ENCODE measurements at regions of chr5 and their contacts with region 1.

Region 1: DNA sequence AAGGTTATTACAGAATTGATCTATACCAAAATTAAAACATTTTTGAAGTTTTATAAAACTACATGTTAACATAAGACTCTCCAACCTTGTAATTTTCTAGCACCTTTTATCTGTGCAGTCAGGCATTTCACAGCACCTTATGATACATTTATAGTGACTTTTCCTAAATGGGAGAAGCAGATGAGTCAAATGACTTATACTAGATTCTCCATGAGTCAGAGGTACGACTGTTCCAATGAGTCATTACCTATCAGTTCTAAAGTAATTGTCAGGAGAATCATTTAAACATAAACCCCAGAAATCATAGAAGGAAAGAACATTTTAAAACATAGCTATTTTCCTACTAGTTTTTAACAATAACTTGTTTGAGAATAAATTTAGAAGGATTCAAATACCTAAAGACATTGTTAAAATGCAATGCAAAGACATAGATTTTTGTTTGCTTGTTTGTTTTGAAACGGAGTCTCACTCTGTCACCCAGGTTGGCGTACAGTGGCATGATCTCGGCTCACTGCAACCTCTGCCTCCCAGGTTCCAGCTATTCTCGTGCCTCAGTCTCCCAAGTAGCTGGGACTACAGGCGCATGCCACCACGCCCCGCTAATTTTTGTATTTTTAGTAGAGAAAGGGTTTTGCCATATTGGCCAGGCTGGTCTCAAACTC is 34.7 kb upstream of the DMXL1 start:
- DNase-seq: no peak

Region 2: DNA sequence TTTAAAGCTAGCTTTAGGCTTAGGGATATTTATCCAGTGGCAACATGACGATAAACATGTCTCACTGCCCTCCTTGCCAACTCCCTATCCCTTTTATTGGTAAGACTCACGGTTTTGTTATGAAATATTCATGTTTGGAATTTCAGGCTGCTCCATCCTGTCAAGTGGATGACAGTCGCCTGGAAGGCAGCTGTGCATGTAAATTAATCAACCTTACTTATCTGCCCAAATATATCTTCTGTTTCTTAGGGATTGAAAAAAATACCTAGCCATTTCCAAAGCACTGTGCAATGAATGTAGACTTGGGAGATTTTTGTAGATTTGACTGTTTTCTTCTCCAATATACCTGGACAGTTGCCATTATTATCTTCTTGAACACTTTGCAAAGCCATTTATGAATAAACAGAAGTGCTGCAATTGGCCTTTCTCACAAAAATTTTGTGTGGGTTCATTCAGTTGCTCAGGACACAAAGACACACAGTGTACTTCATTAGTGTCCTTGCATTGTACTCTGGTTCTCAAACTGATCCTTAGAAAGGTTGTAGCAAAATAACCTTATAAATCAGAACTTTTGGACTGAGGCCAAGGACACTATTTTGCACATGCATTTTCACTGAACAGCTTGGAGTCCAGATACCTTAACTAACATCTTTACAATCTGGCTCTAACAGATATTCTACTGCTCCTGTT is 1572.2 kb before region 1 on chr5:
- intact Hi-C with region 1: no loop called
- DNase-seq: no peak

Region 3: GRCh38 chr5:119105971-119106370 is 69.7 kb after region 1 on chr5:
- intact Hi-C with region 1: loop called in 1 of 2 experiments (anchors 2 kb)
- DNase-seq: no peak